ENCODE measurements at regions of chr3 and their contacts with region 1.

Region 1: GRCh38 chr3:53114011-53114400 is 16.2 kb downstream of the RFT1 start:
- DNase-seq: peak; percentile 74
- H3K4me3 ChIP-seq: no peak overlapping the region
- H3K27ac ChIP-seq: no peak overlapping the region
- H3K4me1 ChIP-seq: no peaks in the 10 kb centered on the region
- H3K27me3 ChIP-seq: no peaks in the 10 kb centered on the region
- CTCF ChIP-seq: peak; percentile 88 to 91
- POLR2A ChIP-seq: no peak

Region 2: DNA sequence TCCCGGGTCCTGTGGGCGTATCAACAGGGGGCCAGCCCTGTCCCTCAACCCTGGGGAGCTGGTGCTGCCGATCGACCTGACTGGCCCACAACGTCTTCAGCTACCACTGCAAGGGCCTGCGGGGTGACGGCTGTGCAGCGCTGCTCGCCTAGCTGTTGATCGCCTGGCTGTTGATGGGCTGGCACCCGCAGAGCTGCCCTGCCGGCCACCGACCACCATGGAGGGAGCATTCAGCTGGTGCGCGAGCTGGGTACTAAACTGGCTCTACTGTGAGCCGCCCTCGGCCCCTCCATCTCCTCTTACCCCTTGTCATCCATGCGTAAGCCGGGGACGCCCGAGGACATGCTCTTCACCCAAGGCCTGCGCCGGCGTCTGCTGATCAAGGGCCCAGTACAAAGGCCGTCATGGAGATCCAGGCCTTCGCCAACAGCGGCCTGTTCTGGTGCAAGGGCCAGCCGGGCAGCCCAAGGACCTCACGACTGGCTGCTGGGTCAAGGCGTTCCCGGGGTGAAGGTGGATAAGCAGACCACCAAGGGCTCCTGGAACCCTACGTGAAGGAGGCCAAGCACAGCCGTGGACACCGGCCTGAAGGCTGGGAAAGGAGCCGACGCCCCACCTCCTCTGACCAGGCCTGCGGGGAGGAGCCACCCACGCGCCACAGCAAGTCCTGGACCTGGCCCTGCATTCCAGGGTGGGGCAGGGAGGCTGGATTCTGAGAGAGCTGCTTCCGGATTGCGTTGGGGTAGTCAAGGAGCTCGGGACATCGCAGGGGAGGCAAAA is 115.1 kb before region 1 on chr3:
- CTCF ChIA-PET with region 1: no interaction called
- POLR2A ChIA-PET with region 1: no interaction called
- dilution Hi-C with region 1: no loop called
- intact Hi-C with region 1: no loop called
- DNase-seq: no peak
- H3K4me3 ChIP-seq: no peak overlapping the region
- H3K27ac ChIP-seq: no peak overlapping the region
- H3K4me1 ChIP-seq: no peaks in the 10 kb centered on the region
- H3K27me3 ChIP-seq: no peaks in the 10 kb centered on the region
- CTCF ChIP-seq: no peak
- POLR2A ChIP-seq: no peak

Region 3: GRCh38 chr3:53056442-53056841 is 57.6 kb before region 1 on chr3:
- CTCF ChIA-PET with region 1: no interaction called
- POLR2A ChIA-PET with region 1: no interaction called
- dilution Hi-C with region 1: no loop called
- intact Hi-C with region 1: no loop called
- DNase-seq: no peak
- H3K4me3 ChIP-seq: no peak overlapping the region
- H3K27ac ChIP-seq: no peak overlapping the region
- H3K4me1 ChIP-seq: no peaks in the 10 kb centered on the region
- H3K27me3 ChIP-seq: no peaks in the 10 kb centered on the region
- CTCF ChIP-seq: peak; percentile 5 to 40
- POLR2A ChIP-seq: no peak

Region 4: DNA sequence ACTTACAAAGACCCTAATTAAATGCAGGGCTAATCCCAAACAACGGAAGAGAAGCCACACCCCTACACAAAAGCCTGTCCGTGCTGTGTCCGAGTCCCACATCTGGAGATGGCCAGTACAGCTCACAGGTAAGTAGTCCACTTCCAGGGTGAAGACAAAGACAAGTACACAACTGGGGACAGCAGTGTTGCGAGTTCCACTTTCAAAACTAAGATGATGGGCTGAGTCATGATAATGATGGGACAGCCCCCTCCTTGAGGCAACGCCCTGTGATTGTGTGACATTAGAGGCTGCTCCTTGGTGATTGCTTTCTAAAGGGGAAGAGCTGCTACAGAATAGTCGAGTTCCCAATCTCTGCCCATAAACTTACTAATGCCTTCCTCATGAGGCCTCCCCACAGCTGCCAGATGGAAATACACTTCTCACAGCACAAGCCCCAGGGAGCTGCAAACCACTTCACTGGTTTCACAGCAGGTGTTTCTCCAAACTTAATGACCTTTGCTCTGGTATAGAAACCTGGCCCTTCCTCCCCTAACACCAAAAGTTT is 11.3 kb before region 1 on chr3:
- CTCF ChIA-PET with region 1: interaction called, 23 read pairs
- POLR2A ChIA-PET with region 1: no interaction called
- dilution Hi-C with region 1: no loop called
- intact Hi-C with region 1: no loop called
- DNase-seq: no peak
- H3K4me3 ChIP-seq: no peak overlapping the region
- H3K27ac ChIP-seq: no peak overlapping the region
- H3K4me1 ChIP-seq: peaks cover 16% of the 10 kb centered on the region
- H3K27me3 ChIP-seq: no peaks in the 10 kb centered on the region
- CTCF ChIP-seq: no peak
- POLR2A ChIP-seq: no peak

Region 5: GRCh38 chr3:53130179-53131061 is 16.4 kb after region 1 on chr3 and contains the start of gene RFT1:
- CTCF ChIA-PET with region 1: interaction called, 23 read pairs
- POLR2A ChIA-PET with region 1: no interaction called
- dilution Hi-C with region 1: no loop called
- intact Hi-C with region 1: no loop called
- DNase-seq: peak; percentile 96
- H3K4me3 ChIP-seq: peak within 1 kb of the TSS; percentile 90 to 99 (median 91)
- H3K27ac ChIP-seq: peak within 1 kb of the TSS; percentile 70
- H3K4me1 ChIP-seq: peaks cover 14% of the 10 kb centered on the region
- H3K27me3 ChIP-seq: no peaks in the 10 kb centered on the region
- CTCF ChIP-seq: no peak
- POLR2A ChIP-seq: peak; percentile 96
- total RNA-seq, gene RFT1: 28.8 and 29.8 TPM in 2 replicates

Region 6: DNA sequence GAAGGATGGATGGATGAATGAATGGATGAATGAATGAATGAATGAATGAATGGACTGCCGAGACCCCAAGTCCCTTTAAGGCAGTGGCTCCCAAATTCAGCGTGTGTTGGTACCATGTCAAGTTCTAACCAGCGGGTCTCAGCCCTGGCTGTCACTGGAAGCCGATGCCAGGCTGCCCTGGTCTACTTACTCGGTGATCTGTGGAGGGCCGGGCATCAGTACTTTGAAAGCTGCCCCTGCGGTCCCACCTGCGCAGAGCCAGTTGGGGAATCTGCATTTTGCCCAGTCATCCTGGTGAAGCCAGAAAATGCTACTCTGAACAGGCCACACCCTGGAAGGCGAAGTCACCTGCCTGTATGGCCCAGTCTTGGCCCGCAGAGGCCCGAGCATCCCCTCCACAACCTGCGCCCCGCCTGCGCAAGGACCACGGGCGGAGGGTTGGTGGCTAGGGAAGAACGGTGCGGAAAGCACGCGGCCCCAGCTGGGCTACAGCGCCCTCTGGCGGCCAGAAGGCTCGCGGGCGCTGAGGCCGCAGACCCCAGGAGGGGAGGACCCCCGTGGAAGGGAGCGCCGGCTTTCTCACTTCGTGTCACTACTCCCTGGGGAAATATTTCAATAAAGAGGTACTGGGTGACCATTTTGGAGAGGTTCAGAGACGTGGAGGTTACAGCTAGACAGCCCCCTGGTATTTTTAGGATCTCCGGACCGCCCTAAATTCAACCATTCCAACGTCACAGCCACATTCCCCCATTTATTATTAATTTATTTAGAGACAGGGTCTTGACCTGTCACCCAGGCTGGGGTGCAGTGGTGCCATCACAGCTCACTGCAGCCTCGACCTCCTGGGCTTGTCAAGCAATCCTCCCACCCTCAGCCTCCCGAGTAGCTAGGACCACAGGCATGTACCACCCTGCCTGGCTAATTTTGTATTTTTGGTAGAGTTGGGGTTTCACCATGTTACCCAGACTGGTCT is 81.9 kb after region 1 on chr3:
- CTCF ChIA-PET with region 1: interaction called, 155 read pairs
- POLR2A ChIA-PET with region 1: no interaction called
- dilution Hi-C with region 1: no loop called
- intact Hi-C with region 1: loop called (anchors 1 kb)
- DNase-seq: peak; percentile 28
- H3K4me3 ChIP-seq: no peak overlapping the region
- H3K27ac ChIP-seq: no peak overlapping the region
- H3K4me1 ChIP-seq: peaks cover 11% of the 10 kb centered on the region
- H3K27me3 ChIP-seq: no peaks in the 10 kb centered on the region
- CTCF ChIP-seq: peak; percentile 98 to 99
- POLR2A ChIP-seq: no peak

Region 7: GRCh38 chr3:53219895-53220483 is 106.0 kb after region 1 on chr3:
- CTCF ChIA-PET with region 1: interaction called, 13 read pairs
- POLR2A ChIA-PET with region 1: no interaction called
- dilution Hi-C with region 1: no loop called
- intact Hi-C with region 1: no loop called
- DNase-seq: peak; percentile 81
- H3K4me3 ChIP-seq: no peak overlapping the region
- H3K27ac ChIP-seq: no peak overlapping the region
- H3K4me1 ChIP-seq: no peaks in the 10 kb centered on the region
- H3K27me3 ChIP-seq: no peaks in the 10 kb centered on the region
- CTCF ChIP-seq: peak; percentile 94 to 95
- POLR2A ChIP-seq: no peak

Region 8: DNA sequence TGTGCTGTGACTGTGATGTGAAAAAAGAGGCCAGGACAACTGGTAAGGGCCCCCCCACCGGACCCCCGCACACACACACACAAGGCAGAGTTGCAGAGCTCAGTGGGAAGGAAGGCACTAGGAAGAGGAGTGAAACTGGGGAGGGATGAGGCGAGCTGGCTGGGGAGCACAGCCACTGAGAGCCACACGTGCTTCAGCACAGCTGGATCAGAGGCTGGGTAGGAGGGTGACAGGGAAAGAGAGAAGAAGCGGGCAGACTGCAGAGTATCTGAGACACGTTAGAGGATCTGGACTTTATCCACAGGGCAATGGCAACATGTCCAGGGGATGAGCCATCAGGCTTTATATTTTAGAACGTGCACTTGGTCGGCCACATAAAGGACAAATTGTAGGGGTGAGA is 179.9 kb after region 1 on chr3:
- CTCF ChIA-PET with region 1: no interaction called
- POLR2A ChIA-PET with region 1: interaction called, 4 read pairs
- dilution Hi-C with region 1: no loop called
- intact Hi-C with region 1: loop called (anchors 10 kb)
- DNase-seq: no peak
- H3K4me3 ChIP-seq: no peak overlapping the region
- H3K27ac ChIP-seq: no peak overlapping the region
- H3K4me1 ChIP-seq: no peaks in the 10 kb centered on the region
- H3K27me3 ChIP-seq: no peaks in the 10 kb centered on the region
- CTCF ChIP-seq: no peak
- POLR2A ChIP-seq: no peak